ENCODE measurements at regions of chr16 and their contacts with region 1.

Region 1: GRCh38 chr16:56700195-56700594 is 17.9 kb downstream of the MT1X start:
- DNase-seq: no peak
- ATAC-seq: no peak
- H3K4me3 ChIP-seq: no peak overlapping the region
- H3K27ac ChIP-seq: no peak overlapping the region
- H3K4me1 ChIP-seq: no peaks in the 10 kb centered on the region
- H3K27me3 ChIP-seq: no peaks in the 10 kb centered on the region
- CTCF ChIP-seq: no peak

Region 2: GRCh38 chr16:56513972-56514371 is 186.2 kb before region 1 on chr16:
- intact Hi-C with region 1: loop called (anchors 5 to 10 kb)
- DNase-seq: no peak
- ATAC-seq: peak; percentile 47 to 66 (median 64)
- H3K4me3 ChIP-seq: no peak overlapping the region
- H3K27ac ChIP-seq: no peak overlapping the region
- H3K4me1 ChIP-seq: peaks cover 32% of the 10 kb centered on the region
- H3K27me3 ChIP-seq: no peaks in the 10 kb centered on the region
- CTCF ChIP-seq: peak; percentile 77

Region 3: GRCh38 chr16:56576585-56577293 is 123.5 kb before region 1 on chr16:
- intact Hi-C with region 1: loop called in 1 of 2 experiments (anchors 1 kb)
- DNase-seq: peak; percentile 75 to 85
- ATAC-seq: peak; percentile 72 to 94 (median 88)
- H3K4me3 ChIP-seq: no peak overlapping the region
- H3K27ac ChIP-seq: no peak overlapping the region
- H3K4me1 ChIP-seq: no peaks in the 10 kb centered on the region
- H3K27me3 ChIP-seq: no peaks in the 10 kb centered on the region
- CTCF ChIP-seq: peak; percentile 63

Region 4: DNA sequence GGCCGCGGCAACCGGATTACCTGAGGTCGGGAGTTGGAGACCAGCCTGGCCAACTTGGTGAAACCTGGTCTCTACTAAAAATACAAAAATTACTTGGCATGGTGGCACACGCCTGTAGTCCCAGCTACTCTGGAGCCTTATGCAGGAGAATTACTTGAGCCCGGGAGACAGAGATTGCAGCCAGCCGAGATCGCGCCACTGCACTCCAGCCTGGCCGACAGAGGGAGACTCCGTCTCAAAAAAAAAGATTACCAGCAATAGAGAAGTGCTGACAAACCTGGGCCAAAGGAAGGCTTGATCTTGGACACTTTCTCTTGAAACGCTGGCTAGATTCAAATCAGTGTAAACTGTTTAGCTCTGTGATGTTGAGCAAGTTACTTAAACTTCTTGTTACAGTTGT is 26.3 kb before region 1 on chr16:
- intact Hi-C with region 1: loop called (anchors 1 to 2 kb)
- DNase-seq: peak in 1 of 2 donors; percentile 72
- ATAC-seq: peak; percentile 58 to 91 (median 79)
- H3K4me3 ChIP-seq: no peak overlapping the region
- H3K27ac ChIP-seq: no peak overlapping the region
- H3K4me1 ChIP-seq: peaks cover under 1% of the 10 kb centered on the region
- H3K27me3 ChIP-seq: peaks cover 0 to 26% (median 4%) of the 10 kb centered on the region in 3 donors
- CTCF ChIP-seq: peak; percentile 71